Right lobe of liver (tissue), 6 donors: ENCODE measurements at regions of chr16 and their contacts with region 1.

Region 1: DNA sequence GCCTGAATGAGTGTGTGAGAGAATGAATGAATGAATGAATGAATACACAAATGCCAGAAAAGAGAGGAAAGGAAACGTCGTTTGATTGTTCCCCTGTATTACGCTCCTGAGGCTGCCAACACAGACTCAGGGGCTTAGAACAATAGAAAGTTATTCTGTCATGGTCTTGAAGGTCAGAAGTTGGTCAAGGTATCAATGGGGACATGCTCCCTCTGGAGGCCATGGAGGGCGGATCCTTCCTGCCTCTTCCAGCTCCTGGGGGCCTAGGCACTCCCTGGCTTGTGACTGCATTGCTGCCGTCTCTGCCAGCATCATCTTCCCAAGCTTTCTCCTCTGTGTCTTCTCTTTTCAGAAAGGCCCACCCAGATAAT is 1.5 kb upstream of the SLC38A8 start:
- DNase-seq: peak in 1 of 3 donors; percentile 33
- ATAC-seq: peak; percentile 20 to 66 (median 50)
- H3K4me3 ChIP-seq: no peak overlapping the region
- H3K27ac ChIP-seq: no peak overlapping the region
- H3K4me1 ChIP-seq: no peaks in the 10 kb centered on the region
- H3K27me3 ChIP-seq: no peaks in the 10 kb centered on the region
- CTCF ChIP-seq: peak; percentile 20 to 42 (median 34)
- POLR2A ChIP-seq: no peak

Region 2: DNA sequence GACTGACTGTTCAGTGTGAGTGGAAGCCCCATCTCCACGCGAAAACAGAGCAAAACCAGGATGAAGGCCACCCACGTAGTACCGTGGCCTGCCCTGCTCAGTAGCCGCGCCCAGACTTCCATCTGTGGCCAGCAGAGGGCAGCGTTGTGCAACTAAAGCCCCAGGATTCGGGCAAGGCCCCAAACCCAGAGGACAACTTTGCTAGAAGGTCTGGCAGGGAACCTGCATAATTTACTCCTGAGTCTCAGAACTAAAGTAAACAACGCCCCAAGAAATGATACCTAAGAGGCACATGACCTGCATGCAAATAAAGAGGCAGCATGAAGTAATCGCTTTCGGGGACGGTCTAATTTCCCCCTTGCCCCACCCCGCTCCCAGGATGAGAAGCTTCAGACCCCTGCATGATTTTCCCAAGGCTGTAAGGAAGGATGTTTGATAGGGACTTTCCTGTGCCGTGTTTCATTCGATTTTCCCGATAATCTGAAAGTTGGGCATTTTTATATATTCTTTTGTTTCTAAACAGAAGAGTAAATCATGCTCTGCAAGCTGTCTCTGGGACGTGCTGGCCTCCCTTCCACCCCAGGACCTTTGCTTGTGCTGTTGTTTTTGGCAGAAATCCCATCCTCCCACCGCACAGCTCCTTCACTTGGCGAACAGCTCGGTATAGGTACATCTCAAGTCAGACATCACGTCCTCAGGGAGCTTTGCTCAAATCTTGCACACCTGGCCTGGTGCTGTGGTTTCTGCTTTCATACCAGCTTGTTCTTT is 217.8 kb before region 1 on chr16:
- intact Hi-C with region 1: loop called (anchors 10 kb)
- DNase-seq: peak; percentile 72 to 81 (median 79)
- ATAC-seq: peak; percentile 94 to 100 (median 96)
- H3K4me3 ChIP-seq: no peak overlapping the region
- H3K27ac ChIP-seq: no peak overlapping the region
- H3K4me1 ChIP-seq: peaks cover 0 to 2% (median 0%) of the 10 kb centered on the region in 4 donors
- H3K27me3 ChIP-seq: no peaks in the 10 kb centered on the region
- CTCF ChIP-seq: peak; percentile 76 to 95 (median 88)
- POLR2A ChIP-seq: no peak

Region 3: DNA sequence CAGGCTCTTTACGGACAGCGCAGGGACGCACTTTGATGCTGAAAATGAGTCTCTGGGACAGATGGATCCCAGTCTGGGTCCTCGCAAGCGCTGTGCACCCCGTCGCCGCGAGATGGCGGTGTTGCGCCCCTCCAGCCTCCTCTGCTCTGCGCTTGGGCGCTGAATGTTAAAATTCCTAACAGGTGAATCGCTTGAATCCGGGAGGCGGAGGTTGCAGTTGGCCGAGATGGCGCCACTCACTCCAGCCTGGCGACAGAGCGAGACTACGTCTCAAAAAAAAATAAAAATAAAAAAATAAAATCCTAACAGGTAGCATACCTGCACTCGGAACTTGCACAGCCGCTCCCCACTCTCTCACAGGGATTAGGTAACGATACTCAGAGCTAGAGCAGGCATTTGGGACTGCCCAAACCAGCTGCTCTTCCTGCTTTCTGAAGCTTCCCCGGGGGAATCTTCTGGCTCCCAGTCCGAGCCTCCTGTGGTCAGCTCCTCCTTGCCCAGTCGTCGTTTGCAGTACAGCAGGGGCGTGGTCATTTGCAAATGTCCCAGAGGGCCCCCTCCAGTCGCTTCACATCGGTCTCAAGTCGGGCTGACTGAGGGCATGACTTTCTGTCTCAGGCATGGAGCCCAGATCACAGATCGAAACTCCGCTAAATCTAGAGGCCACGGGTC is 117.2 kb before region 1 on chr16:
- intact Hi-C with region 1: loop called in 1 of 2 experiments (anchors 10 kb)
- DNase-seq: peak; percentile 82 to 87 (median 85)
- ATAC-seq: peak; percentile 89 to 92 (median 92)
- H3K4me3 ChIP-seq: peak overlapping the region in 2 of 3 donors; percentile 29 to 33
- H3K27ac ChIP-seq: peak overlapping the region; percentile 25 to 77 (median 58)
- H3K4me1 ChIP-seq: peaks cover 0 to 18% (median 6%) of the 10 kb centered on the region in 4 donors
- H3K27me3 ChIP-seq: no peaks in the 10 kb centered on the region
- CTCF ChIP-seq: peak; percentile 92 to 100 (median 97)
- POLR2A ChIP-seq: no peak